Activated T-helper 1 cell treated with anti-CD3 and anti-CD28 coated beads, Interleukin-12 subunit alpha, Interleukin-12 subunit beta, Interleukin-2, Interleukin-4 antibody, amounts not matched to agents 30 ng/mL and 10 ng/mL and 1 ng/mL, durations not matched to agents 14 hours and 24 hours and 36 hours (primary cell): ENCODE measurements at regions of chr7 and their contacts with region 1.

Region 1: GRCh38 chr7:76047811-76048667 is at the starts of genes MDH2 and STYXL1:
- DNase-seq: peak; percentile 90
- H3K4me3 Mint-ChIP-seq: peak within 1 kb of the TSS; percentile 99
- H3K27ac Mint-ChIP-seq: peak within 1 kb of the TSS; percentile 97
- H3K4me1 Mint-ChIP-seq: peaks cover 53% of the 10 kb centered on the region
- H3K27me3 Mint-ChIP-seq: no peaks in the 10 kb centered on the region
- total RNA-seq, gene MDH2: 249 and 292 TPM in 2 replicates
- total RNA-seq, gene STYXL1: 35.3 and 38.7 TPM in 2 replicates

Region 2: DNA sequence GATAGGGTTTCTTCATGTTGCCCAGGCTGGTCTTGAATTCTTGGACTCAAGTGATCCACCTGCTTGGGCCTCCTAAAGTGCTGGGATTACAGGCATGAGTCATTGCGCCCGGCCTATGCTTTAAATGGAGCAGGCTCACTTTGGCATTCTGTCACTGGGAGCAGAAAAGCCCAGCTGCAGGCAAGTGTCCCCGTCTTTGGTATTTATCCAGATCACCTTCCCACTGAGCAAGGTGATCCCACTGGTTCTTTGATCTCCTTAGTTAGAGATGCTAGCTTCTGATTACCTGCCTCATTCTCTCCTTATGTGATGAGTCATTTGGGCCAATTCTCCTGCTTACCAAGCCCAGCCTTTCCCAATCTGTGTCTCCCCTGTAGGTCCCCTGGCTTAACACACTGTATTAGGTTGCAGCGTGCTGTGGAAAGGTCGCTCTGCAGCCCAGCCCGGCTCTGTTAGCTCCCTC is 516.6 kb before region 1 on chr7:
- intact Hi-C with region 1: loop called (anchors 1 kb)
- DNase-seq: no peak
- H3K4me3 Mint-ChIP-seq: no peak overlapping the region
- H3K27ac Mint-ChIP-seq: no peak overlapping the region
- H3K4me1 Mint-ChIP-seq: peaks cover 20% of the 10 kb centered on the region
- H3K27me3 Mint-ChIP-seq: peaks cover 5% of the 10 kb centered on the region

Region 3: GRCh38 chr7:75866489-75867389 is 181.3 kb before region 1 on chr7:
- intact Hi-C with region 1: loop called (anchors 2 kb)
- DNase-seq: no peak
- H3K4me3 Mint-ChIP-seq: no peak overlapping the region
- H3K27ac Mint-ChIP-seq: no peak overlapping the region
- H3K4me1 Mint-ChIP-seq: peaks cover 24% of the 10 kb centered on the region
- H3K27me3 Mint-ChIP-seq: peaks cover 8% of the 10 kb centered on the region

Region 4: GRCh38 chr7:75994388-75995051 is 53.5 kb before region 1 on chr7 and contains the start of gene TMEM120A:
- intact Hi-C with region 1: loop called (anchors 1 kb)
- DNase-seq: peak; percentile 93
- H3K4me3 Mint-ChIP-seq: peak within 1 kb of the TSS; percentile 84
- H3K27ac Mint-ChIP-seq: peak within 1 kb of the TSS; percentile 18
- H3K4me1 Mint-ChIP-seq: peaks cover 25% of the 10 kb centered on the region
- H3K27me3 Mint-ChIP-seq: no peaks in the 10 kb centered on the region
- total RNA-seq, gene TMEM120A: 44.3 and 49.9 TPM in 2 replicates

Region 5: GRCh38 chr7:76016191-76016947 is 31.7 kb before region 1 on chr7:
- intact Hi-C with region 1: no loop called
- DNase-seq: no peak
- H3K4me3 Mint-ChIP-seq: no peak overlapping the region
- H3K27ac Mint-ChIP-seq: no peak overlapping the region
- H3K4me1 Mint-ChIP-seq: peaks cover 11% of the 10 kb centered on the region
- H3K27me3 Mint-ChIP-seq: peaks cover 4% of the 10 kb centered on the region

Region 6: GRCh38 chr7:76133164-76133775 is 85.2 kb after region 1 on chr7:
- intact Hi-C with region 1: loop called (anchors 2 kb)
- DNase-seq: no peak
- H3K4me3 Mint-ChIP-seq: peak overlapping the region; percentile 63
- H3K27ac Mint-ChIP-seq: peak overlapping the region; percentile 79
- H3K4me1 Mint-ChIP-seq: peaks cover 37% of the 10 kb centered on the region
- H3K27me3 Mint-ChIP-seq: peaks cover 2% of the 10 kb centered on the region

Region 7: DNA sequence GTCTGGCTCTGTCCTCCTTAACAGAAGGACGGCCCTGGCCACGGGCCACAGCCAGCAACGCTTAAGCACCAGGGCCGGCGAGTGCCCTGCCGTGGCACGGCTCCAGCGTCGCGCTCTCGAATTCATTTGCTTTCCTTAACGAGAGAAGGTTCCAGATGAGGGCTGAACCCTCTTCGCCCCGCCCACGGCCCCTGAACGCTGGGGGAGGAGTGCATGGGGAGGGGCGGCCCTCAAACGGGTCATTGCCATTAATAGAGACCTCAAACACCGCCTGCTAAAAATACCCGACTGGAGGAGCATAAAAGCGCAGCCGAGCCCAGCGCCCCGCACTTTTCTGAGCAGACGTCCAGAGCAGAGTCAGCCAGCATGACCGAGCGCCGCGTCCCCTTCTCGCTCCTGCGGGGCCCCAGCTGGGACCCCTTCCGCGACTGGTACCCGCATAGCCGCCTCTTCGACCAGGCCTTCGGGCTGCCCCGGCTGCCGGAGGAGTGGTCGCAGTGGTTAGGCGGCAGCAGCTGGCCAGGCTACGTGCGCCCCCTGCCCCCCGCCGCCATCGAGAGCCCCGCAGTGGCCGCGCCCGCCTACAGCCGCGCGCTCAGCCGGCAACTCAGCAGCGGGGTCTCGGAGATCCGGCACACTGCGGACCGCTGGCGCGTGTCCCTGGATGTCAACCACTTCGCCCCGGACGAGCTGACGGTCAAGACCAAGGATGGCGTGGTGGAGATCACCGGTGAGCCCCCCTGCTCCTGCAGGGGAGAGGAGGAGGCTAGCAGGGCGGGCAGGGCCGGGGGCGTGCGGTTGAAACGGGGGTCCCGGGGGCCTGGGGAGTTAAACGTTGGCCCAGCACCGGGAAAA is 254.5 kb after region 1 on chr7 and contains the start of gene HSPB1:
- intact Hi-C with region 1: no loop called
- DNase-seq: peak; percentile 34
- H3K4me3 Mint-ChIP-seq: peak within 1 kb of the TSS; percentile 89
- H3K27ac Mint-ChIP-seq: peak within 1 kb of the TSS; percentile 90
- H3K4me1 Mint-ChIP-seq: peaks cover 17% of the 10 kb centered on the region
- H3K27me3 Mint-ChIP-seq: peaks cover 19% of the 10 kb centered on the region
- total RNA-seq, gene HSPB1: 78.4 and 87.2 TPM in 2 replicates